Activated CD4-positive, alpha-beta T cell treated with anti-CD3 and anti-CD28 coated beads, Interleukin-2, amount 10 ng/mL, durations not matched to agents 7 days and 5 days (primary cell): ENCODE measurements at regions of chr11 and their contacts with region 1.

Region 1: GRCh38 chr11:86041975-86042378 is 26.9 kb downstream of the PICALM start:
- DNase-seq: peak; percentile 69
- H3K4me3 Mint-ChIP-seq: no peak overlapping the region
- H3K27ac Mint-ChIP-seq: peak overlapping the region; percentile 14
- H3K4me1 Mint-ChIP-seq: peaks cover 55% of the 10 kb centered on the region
- H3K27me3 Mint-ChIP-seq: no peaks in the 10 kb centered on the region

Region 2: DNA sequence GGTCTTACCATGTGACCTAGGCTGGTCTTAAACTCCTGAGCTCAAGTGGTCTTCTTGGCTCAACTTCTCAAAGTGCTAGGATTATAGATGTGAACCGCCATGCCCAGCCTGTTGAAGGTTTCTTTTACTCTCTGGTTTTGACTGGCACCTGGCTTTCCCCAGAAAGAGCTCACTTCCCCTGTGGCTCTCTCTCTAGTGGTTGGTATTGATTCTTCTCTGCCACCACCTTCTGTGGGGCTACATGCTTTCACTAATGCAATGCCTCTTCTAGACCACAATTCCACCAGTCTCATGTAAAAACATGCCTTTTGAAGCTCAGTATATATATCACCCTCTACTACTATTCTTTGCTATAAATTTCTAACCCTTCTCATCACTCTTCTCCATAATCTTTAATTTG is 119.6 kb before region 1 on chr11:
- CTCF ChIA-PET with region 1: no interaction called
- POLR2A ChIA-PET with region 1: no interaction called
- DNase-seq: no peak
- H3K4me3 Mint-ChIP-seq: no peak overlapping the region
- H3K27ac Mint-ChIP-seq: no peak overlapping the region
- H3K4me1 Mint-ChIP-seq: peaks cover 3% of the 10 kb centered on the region
- H3K27me3 Mint-ChIP-seq: peaks cover 16% of the 10 kb centered on the region

Region 3: DNA sequence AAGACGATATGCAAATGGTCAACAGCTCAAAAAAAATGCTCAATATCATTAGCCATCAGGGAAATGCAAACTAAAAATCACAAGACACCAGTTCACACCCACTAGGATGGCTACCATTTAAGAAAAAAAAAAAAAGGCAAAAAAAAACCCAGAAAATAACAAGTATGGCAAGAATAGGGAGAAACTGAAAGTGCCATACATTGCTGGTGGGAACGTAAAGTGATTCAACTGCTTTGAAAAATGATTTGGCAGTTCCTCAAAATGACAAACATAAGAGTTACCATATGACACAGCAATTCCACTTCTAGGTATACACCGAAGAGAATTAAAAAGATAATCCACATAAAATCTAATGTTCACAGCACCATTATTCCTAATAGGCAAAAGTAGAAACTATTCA is 20.6 kb before region 1 on chr11:
- CTCF ChIA-PET with region 1: interaction called, 14 read pairs
- POLR2A ChIA-PET with region 1: no interaction called
- DNase-seq: no peak
- H3K4me3 Mint-ChIP-seq: no peak overlapping the region
- H3K27ac Mint-ChIP-seq: no peak overlapping the region
- H3K4me1 Mint-ChIP-seq: peaks cover 22% of the 10 kb centered on the region
- H3K27me3 Mint-ChIP-seq: no peaks in the 10 kb centered on the region

Region 4: DNA sequence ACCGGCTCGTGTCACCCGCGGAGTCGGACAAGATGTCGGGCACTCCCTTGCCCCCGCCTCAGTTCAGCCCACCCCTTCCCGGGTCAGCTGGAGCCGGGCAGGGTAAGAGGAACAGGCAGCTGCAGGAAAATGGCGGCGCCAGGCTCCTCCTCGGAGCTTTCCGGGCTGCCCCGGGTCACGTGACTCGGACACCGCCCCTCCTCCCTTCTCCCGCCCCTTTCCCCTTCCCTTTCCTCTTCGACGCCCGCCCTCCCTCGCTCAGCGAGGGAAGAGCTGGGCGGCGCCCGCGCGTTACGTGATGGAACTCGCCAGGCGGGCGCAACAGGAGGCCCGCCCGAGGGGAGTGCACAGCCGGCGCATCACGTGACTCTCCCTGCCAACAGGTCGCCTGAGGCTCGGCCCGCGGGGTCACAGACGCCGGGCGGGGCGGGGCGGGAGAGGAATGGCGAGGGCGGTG is 27.0 kb after region 1 on chr11 and contains the start of gene PICALM:
- CTCF ChIA-PET with region 1: interaction called, 12 read pairs
- POLR2A ChIA-PET with region 1: interaction called, 4 read pairs
- DNase-seq: peak; percentile 98
- H3K4me3 Mint-ChIP-seq: peak within 1 kb of the TSS; percentile 98
- H3K27ac Mint-ChIP-seq: peak within 1 kb of the TSS; percentile 96
- H3K4me1 Mint-ChIP-seq: peaks cover 30% of the 10 kb centered on the region
- H3K27me3 Mint-ChIP-seq: no peaks in the 10 kb centered on the region
- total RNA-seq, gene PICALM: 89.4 to 140 TPM

Region 5: DNA sequence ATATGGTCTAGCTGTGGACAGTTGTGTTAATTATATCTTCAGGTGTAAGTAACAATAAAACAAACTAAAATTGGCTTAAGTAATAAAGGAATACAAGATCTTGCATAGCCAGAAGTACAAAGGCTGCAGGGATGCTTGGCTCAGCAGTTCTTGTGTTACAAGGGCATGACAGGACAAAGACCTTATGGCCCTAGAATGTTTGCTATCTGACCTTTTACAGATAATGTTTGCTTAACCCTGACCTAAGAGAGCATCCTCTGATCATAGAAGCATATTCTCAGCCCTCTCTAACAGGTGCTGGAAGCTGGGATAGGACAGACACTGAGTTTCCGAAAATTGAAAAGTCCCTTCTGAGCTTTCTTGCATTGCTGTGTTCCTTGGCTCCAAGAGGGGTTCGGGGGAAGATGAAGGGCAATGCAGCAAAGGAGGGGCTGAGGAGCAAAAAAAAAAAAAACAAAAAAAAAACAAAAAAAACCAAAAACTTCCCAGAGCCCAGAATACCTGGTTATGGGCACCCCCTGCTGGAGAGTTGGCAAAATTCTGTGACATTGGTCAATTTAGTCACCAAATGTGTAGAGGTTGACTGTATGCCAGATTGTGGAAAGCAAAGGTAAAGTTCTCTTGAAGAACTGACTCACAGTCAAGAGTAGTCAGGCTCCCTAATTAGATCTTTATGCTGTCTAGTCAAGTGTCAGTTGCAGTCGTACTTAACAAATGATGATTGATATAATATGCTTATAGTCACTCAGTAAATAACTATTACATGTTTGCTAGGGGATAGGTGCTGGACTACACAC is 249.7 kb after region 1 on chr11:
- CTCF ChIA-PET with region 1: interaction called, 18 read pairs
- POLR2A ChIA-PET with region 1: no interaction called
- DNase-seq: peak; percentile 70
- H3K4me3 Mint-ChIP-seq: no peak overlapping the region
- H3K27ac Mint-ChIP-seq: no peak overlapping the region
- H3K4me1 Mint-ChIP-seq: peaks cover 50% of the 10 kb centered on the region
- H3K27me3 Mint-ChIP-seq: peaks cover 2% of the 10 kb centered on the region